Endothelial cell of umbilical vein (primary cell): ENCODE measurements at regions of chr13 and their contacts with region 1.

Region 1: GRCh38 chr13:112606109-112607001 is 18.4 kb upstream of the TUBGCP3 start:
- DNase-seq: peak; percentile 88
- H3K4me3 ChIP-seq: peak overlapping the region; percentile 40 to 86 (median 55)
- H3K27ac ChIP-seq: peak overlapping the region; percentile 50
- H3K4me1 ChIP-seq: peaks cover 11% of the 10 kb centered on the region
- H3K27me3 ChIP-seq: peaks cover 6 to 9% of the 10 kb centered on the region in 2 experiments
- CTCF ChIP-seq: peak; percentile 77 to 98
- POLR2A ChIP-seq: no peak

Region 2: DNA sequence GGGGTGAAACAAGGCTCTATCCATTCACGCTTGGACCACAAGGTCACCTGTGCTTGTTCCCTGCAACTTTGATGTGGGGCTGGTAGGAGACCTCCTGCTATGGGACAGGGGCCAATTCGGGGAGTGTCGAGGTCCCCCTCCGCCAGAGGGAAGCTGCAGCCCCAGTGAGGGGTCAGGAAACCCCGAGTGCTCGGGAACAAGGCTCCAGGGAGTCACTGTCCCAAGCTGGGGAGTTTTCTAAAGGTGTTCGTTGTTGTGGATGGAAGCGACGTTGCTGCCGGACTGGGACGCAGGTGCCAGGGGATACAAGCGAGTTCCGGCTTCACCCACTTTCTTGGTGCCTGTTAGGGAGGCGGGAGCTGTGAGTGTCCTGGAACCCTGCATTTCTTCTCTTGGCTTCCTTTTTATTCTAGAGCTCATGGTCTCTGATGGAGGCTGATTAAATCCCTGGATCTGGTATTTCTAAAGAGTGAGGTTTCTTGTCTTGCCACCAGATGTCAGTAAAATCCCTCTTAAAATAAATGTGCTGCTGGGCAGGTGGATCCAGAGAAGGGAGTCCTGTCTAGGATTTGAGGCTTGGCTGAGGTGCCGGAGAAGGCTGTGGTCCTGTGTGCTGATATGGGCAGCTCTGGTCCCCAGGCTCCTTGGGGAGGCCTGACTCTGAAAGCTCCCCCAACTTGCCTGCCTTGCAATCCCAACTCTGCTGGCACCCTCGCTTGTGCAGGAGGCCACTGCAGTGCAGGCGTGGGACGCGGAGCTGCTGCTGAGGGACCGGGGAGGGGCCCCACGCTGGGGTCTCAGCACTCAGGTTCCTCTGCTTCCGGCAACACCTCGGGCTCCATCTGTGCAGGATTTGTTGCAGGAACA is 1132.0 kb before region 1 on chr13:
- CTCF ChIA-PET with region 1: interaction called, 10 read pairs
- POLR2A ChIA-PET with region 1: no interaction called
- dilution Hi-C with region 1: no loop called
- intact Hi-C with region 1: no loop called
- DNase-seq: peak; percentile 20
- H3K4me3 ChIP-seq: no peak overlapping the region
- H3K27ac ChIP-seq: no peak overlapping the region
- H3K4me1 ChIP-seq: no peaks in the 10 kb centered on the region
- H3K27me3 ChIP-seq: no peaks in the 10 kb centered on the region
- CTCF ChIP-seq: peak; percentile 19 to 35
- POLR2A ChIP-seq: no peak

Region 3: GRCh38 chr13:112066624-112067004 is 539.7 kb before region 1 on chr13:
- CTCF ChIA-PET with region 1: no interaction called
- POLR2A ChIA-PET with region 1: no interaction called
- dilution Hi-C with region 1: no loop called
- intact Hi-C with region 1: loop called (anchors 1 kb)
- DNase-seq: no peak
- H3K4me3 ChIP-seq: no peak overlapping the region
- H3K27ac ChIP-seq: no peak overlapping the region
- H3K4me1 ChIP-seq: no peaks in the 10 kb centered on the region
- H3K27me3 ChIP-seq: peaks cover 73 to 84% of the 10 kb centered on the region in 2 experiments
- CTCF ChIP-seq: no peak
- POLR2A ChIP-seq: no peak

Region 4: DNA sequence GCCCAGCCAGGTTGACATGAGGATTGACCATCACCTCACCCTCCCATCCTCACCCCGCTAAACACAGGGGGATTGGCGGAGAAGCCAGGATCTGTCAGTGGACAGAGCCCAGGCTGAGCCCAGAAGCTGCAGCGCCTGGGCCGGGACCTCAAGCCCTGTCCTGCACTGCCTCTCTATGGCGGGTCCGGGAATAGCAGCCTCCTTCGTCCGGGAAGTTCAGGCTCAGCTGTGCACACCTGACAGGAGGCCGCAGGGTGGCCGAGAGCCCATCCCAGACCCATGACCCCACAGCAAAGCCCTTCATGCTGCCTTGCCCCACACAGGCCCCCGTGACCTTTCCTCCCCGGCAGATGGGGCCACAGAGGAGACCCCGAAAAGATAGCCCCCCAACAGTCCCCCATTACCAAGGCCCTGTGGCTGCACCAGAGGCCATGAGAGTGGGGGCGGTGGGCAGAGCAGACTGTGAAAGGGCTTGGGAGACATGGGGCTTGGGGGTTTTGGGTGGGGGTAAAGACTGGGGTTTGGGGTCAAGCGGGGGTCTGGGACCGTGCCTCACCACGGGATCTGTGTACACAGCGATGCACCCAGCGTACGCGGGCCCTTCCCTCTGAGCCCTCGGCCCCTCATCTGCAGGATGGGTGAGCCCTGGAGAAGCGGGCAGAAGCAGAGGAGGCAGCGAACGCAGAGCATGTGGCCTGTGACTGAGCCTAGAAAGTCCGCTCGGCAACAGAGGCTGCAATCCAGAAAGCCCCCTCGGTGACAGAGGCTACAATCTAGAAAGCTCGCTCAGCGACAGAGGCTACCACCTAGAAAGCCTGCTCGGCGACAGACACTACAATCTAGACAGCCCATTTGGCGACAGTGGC is 162.1 kb before region 1 on chr13:
- CTCF ChIA-PET with region 1: interaction called, 4 read pairs
- POLR2A ChIA-PET with region 1: no interaction called
- dilution Hi-C with region 1: no loop called
- intact Hi-C with region 1: loop called (anchors 1 kb)
- DNase-seq: peak; percentile 53
- H3K4me3 ChIP-seq: no peak overlapping the region
- H3K27ac ChIP-seq: no peak overlapping the region
- H3K4me1 ChIP-seq: no peaks in the 10 kb centered on the region
- H3K27me3 ChIP-seq: no peaks in the 10 kb centered on the region
- CTCF ChIP-seq: peak; percentile 85 to 94
- POLR2A ChIP-seq: no peak

Region 5: DNA sequence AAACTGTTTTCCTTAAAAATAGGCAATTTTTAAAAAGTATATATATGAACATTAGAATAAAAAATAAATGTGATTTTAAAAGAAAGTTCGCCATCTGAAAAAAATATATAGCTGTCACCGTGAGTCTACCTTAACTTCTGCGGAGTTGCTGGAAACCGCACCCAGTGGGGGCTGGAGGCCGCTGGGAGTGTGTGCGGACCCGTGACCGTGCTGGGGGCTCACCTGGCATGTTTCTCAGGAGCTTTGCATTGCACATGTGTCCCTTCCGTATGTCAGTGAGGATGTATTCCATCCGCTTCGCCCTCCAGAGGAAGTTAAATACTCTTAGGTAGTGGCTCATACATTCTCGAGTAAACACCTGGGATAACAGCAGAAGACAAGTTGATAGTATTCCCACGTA is 90.1 kb before region 1 on chr13:
- CTCF ChIA-PET with region 1: interaction called, 10 read pairs
- POLR2A ChIA-PET with region 1: no interaction called
- dilution Hi-C with region 1: no loop called
- intact Hi-C with region 1: no loop called
- DNase-seq: no peak
- H3K4me3 ChIP-seq: no peak overlapping the region
- H3K27ac ChIP-seq: no peak overlapping the region
- H3K4me1 ChIP-seq: no peaks in the 10 kb centered on the region
- H3K27me3 ChIP-seq: no peaks in the 10 kb centered on the region
- CTCF ChIP-seq: no peak
- POLR2A ChIP-seq: no peak

Region 6: DNA sequence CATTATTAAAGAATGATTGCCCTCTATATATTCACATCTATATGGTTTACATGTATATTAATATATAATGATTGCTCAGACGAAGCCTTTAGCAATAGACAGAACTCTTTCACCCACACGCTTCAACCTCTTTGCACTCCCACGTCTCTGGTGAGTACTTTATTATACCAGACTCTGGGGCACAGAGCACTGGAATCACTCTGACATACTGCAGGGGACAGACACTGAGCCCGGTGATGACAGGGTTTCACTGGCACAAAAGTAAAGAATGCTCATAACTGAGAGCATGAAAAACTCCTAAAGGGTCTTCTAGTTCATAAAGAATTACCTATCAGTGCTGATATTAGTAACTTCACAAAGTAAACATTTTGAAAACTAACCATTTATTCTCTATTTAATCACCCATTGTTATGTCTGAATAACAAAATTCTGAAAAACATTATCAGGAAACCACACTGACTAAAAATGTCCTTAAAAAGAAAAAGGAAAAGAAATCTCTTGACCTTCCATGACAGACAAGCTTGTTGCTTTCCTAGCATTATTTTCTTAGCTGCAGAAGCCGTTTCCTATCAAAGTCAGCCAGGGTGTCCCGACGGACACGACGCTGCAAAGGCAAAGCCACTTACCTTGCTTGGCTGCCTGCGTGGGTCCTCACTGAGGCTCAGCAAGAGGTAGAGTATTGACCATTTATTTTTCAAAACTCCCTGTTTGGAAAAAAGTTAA is 47.5 kb before region 1 on chr13:
- CTCF ChIA-PET with region 1: no interaction called
- POLR2A ChIA-PET with region 1: no interaction called
- dilution Hi-C with region 1: no loop called
- intact Hi-C with region 1: loop called (anchors 1 kb)
- DNase-seq: peak; percentile 95
- H3K4me3 ChIP-seq: peak overlapping the region in 1 of 3 experiments; percentile 15
- H3K27ac ChIP-seq: peak overlapping the region; percentile 86
- H3K4me1 ChIP-seq: peaks cover 22% of the 10 kb centered on the region
- H3K27me3 ChIP-seq: no peaks in the 10 kb centered on the region
- CTCF ChIP-seq: no peak
- POLR2A ChIP-seq: peak; percentile 53

Region 7: GRCh38 chr13:112669881-112670499 is 63.6 kb after region 1 on chr13:
- CTCF ChIA-PET with region 1: no interaction called
- POLR2A ChIA-PET with region 1: no interaction called
- dilution Hi-C with region 1: no loop called
- intact Hi-C with region 1: no loop called
- DNase-seq: no peak
- H3K4me3 ChIP-seq: no peak overlapping the region
- H3K27ac ChIP-seq: no peak overlapping the region
- H3K4me1 ChIP-seq: no peaks in the 10 kb centered on the region
- H3K27me3 ChIP-seq: peaks cover 0 to 2% of the 10 kb centered on the region in 2 experiments
- CTCF ChIP-seq: no peak
- POLR2A ChIP-seq: no peak

Region 8: DNA sequence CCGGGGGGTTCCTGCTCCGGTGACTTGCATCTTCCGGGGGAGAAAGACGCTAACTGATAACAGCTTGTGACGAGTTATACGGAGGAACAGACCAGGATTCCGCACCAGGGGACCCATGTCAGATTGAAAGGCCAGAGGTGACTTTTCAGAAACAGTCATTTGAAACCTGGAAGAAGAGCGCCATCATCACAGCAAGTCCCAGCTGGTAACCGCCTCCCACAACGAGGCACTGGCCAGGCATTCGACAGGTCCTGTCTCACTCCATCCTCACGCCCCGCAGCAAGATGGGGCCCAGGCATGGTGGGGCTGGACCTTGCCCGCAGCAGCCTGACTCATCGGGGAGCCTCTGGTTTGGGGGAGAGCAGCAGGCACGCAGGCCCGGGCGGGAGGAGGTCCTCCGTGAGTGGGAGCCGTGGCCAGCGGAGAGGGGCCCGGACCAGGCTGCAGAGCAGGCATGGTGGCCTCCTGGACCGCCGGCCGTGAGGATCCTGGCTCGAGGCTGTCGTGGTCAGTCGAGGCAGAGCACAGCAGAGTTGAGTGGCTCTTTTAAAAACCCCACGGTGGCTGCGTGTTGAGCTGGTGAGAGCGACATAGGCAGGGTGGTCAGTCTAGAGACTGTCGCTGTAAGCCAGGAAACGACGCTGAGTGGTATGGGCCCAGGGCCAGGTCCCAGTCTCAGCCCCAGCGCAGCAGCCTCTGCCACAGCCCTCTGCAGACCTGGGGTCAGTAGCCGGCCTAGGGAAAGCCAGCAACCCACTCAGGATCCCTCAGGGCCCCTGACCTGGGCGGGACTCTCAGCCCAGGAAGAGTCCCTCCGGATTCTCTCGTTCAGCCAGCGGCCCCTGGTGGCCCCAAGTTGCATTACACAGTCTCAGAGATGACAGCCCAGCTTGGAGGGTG is 267.7 kb after region 1 on chr13:
- CTCF ChIA-PET with region 1: interaction called, 8 read pairs
- POLR2A ChIA-PET with region 1: no interaction called
- dilution Hi-C with region 1: no loop called
- intact Hi-C with region 1: loop called (anchors 2 kb)
- DNase-seq: peak; percentile 61
- H3K4me3 ChIP-seq: no peak overlapping the region
- H3K27ac ChIP-seq: no peak overlapping the region
- H3K4me1 ChIP-seq: no peaks in the 10 kb centered on the region
- H3K27me3 ChIP-seq: no peaks in the 10 kb centered on the region
- CTCF ChIP-seq: peak; percentile 90 to 92
- POLR2A ChIP-seq: no peak